Activated T-helper 1 cell treated with anti-CD3 and anti-CD28 coated beads, Interleukin-12 subunit alpha, Interleukin-12 subunit beta, Interleukin-2, Interleukin-4 antibody, amounts not matched to agents 30 ng/mL and 10 ng/mL and 1 ng/mL, durations not matched to agents 14 hours and 24 hours and 36 hours (primary cell): ENCODE measurements at regions of chr3 and their contacts with region 1.

Region 1: DNA sequence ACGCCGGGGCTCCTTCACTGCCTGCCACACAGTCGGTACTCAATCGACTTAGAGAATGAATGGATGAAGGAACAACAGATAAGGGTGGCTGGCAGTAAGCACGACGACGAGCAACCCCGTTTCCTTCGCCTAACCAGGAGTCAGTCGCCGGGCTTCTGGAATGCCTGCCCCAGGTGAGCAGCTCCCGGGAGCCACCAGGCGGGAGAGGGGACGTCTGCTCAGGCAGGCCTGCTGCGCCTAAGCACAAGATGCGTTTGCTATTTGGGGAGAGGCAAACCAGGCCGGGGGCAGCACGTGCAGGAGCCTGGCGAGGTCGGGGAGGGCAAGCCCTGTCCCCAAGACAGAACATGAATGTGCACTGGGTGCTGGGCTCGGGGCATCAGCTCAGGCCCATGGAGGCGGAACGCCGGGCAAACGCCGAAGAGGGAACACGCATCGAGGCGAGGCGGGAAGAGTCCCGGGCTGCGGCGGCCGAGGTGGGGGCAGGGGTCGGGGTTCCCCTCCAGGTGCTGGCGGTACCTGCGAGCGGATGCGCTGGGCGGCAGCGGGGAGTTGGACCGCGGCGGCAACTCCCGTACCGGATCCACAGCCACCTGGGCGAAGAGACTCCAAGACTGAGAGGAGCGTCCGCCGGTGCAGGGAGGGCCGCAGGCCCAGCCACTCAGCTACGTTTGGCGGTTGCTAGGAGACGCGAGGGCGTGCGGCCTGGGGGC is at the start of gene CFAP92:
- DNase-seq: peak; percentile 90
- H3K4me3 Mint-ChIP-seq: peak within 1 kb of the TSS; percentile 72
- H3K27ac Mint-ChIP-seq: peak within 1 kb of the TSS; percentile 43
- H3K4me1 Mint-ChIP-seq: peaks cover 36% of the 10 kb centered on the region
- H3K27me3 Mint-ChIP-seq: peaks cover 14% of the 10 kb centered on the region
- total RNA-seq, gene CFAP92: 0.13 and 0.29 TPM in 2 replicates

Region 2: GRCh38 chr3:128824132-128824850 is 169.3 kb before region 1 on chr3:
- intact Hi-C with region 1: no loop called
- DNase-seq: no peak
- H3K4me3 Mint-ChIP-seq: no peak overlapping the region
- H3K27ac Mint-ChIP-seq: no peak overlapping the region
- H3K4me1 Mint-ChIP-seq: no peaks in the 10 kb centered on the region
- H3K27me3 Mint-ChIP-seq: no peaks in the 10 kb centered on the region

Region 3: GRCh38 chr3:128969993-128970739 is 23.5 kb before region 1 on chr3:
- intact Hi-C with region 1: loop called (anchors 2 kb)
- DNase-seq: peak; percentile 52
- H3K4me3 Mint-ChIP-seq: no peak overlapping the region
- H3K27ac Mint-ChIP-seq: no peak overlapping the region
- H3K4me1 Mint-ChIP-seq: peaks cover 10% of the 10 kb centered on the region
- H3K27me3 Mint-ChIP-seq: peaks cover 9% of the 10 kb centered on the region

Region 4: DNA sequence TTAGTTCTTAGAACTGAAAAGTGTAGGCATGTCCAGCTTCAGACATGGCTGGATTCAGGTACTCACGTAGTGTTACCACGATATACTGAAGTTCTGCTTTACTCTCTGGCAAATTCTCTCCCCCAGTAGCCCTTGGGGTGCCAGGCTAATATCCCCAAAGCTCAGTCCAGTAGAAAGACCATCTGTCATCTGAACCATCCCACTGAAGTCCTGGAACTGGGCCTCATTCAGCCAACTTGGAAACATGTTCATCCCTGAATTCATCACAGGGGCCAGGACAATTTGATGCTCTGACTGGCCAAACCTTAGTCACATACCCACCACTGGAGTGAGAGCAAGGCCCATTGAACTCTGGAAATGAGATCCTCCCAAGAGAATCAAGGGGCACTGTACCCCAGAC is 15.6 kb after region 1 on chr3:
- intact Hi-C with region 1: no loop called
- DNase-seq: no peak
- H3K4me3 Mint-ChIP-seq: no peak overlapping the region
- H3K27ac Mint-ChIP-seq: no peak overlapping the region
- H3K4me1 Mint-ChIP-seq: peaks cover 29% of the 10 kb centered on the region
- H3K27me3 Mint-ChIP-seq: peaks cover 7% of the 10 kb centered on the region

Region 5: DNA sequence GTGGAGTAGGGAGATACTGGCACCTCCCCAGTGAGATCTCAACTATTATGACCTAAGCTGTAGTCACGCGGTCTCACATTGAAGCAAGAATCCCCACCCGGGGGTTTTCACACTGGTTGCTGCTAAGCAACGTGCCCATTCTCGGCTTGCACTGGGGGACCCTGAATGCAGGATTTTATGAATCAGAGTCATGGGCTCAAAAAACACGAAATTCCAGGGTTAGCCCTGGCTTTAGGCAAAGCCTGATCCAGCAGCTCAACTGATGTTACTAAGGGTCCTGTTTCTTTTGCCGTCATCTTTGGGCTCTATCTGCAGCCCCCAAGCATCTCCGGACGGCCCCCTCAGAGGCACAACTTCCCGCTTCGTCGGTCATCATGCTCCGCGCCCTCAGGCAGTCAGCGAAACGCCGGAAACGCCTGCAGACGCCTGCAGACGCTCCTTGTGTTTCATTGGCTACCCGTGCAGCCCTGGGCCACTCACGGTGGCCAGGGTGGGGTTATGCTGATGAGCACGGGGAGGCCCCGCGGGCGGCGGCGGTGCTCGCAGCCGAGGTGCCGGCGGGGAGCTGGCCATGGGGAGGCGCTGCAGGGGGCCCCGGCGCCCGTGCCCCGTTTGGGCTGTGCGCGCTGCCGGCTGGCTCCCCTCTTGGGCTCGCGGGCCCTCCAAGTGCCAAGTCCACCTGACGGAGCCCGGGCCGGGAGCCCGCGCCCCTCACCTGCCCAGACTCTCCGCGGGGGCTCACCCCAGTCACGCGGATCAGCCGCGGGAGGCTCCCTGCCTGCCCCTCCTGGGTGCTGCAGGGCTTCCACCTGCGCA is 33.3 kb after region 1 on chr3:
- intact Hi-C with region 1: loop called (anchors 1 kb)
- DNase-seq: peak; percentile 93
- H3K4me3 Mint-ChIP-seq: peak overlapping the region; percentile 80
- H3K27ac Mint-ChIP-seq: peak overlapping the region; percentile 87
- H3K4me1 Mint-ChIP-seq: peaks cover 24% of the 10 kb centered on the region
- H3K27me3 Mint-ChIP-seq: peaks cover 13% of the 10 kb centered on the region

Region 6: DNA sequence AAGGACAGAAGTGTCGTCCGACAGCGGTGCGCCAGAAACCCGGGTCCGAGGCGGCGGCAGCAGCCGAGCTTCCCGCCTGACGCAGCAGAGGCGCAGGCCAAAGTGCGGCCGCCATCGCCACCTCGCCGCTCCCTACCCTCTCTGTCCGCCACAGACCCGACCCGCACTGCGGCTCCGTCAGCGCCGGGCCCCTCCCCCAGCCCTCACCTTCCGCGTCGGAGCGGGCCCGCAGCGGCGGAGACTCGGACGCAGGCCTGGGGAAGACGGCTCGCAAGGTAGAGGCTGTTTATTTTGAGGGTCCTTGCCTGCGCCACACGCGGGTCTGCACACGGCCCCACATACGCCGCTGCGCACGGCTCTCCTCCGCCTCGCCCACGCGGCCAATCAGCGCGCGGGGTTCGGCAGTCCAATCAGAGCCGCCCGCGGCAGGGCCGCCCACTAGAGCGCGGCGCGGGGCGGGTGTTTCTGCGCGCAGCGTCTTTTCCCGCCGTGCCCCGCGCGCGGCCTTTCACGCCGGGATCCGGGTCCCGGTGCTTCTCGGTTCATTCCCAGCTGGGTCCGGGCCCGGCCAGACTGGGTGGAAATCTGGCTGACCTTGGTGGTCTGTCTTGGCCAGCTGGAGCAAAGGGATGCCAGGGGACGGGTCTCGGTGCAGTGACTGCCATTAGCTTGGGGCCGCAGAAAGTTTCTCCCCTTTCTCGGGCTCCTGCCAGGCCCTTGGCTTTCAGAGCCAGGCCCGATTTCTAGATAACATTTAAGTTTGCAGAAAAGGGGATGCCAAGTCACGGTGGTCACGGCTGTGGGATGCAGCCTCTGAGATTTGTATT is 190.2 kb after region 1 on chr3 and contains the start of gene CNBP:
- intact Hi-C with region 1: loop called (anchors 1 kb)
- DNase-seq: peak; percentile 91
- H3K4me3 Mint-ChIP-seq: peak within 1 kb of the TSS; percentile 97
- H3K27ac Mint-ChIP-seq: peak within 1 kb of the TSS; percentile 98
- H3K4me1 Mint-ChIP-seq: peaks cover 35% of the 10 kb centered on the region
- H3K27me3 Mint-ChIP-seq: no peaks in the 10 kb centered on the region
- total RNA-seq, gene CNBP: 408 and 425 TPM in 2 replicates

Region 7: GRCh38 chr3:129238945-129239706 is 245.5 kb after region 1 on chr3:
- intact Hi-C with region 1: loop called (anchors 2 kb)
- DNase-seq: peak; percentile 58
- H3K4me3 Mint-ChIP-seq: peak overlapping the region; percentile 41
- H3K27ac Mint-ChIP-seq: peak overlapping the region; percentile 90
- H3K4me1 Mint-ChIP-seq: peaks cover 43% of the 10 kb centered on the region
- H3K27me3 Mint-ChIP-seq: no peaks in the 10 kb centered on the region